Heart right ventricle (tissue), 16 donors: ENCODE measurements at regions of chr3 and their contacts with region 1.

Region 1: GRCh38 chr3:127544192-127544802 is 46.2 kb downstream of the TPRA1 start:
- DNase-seq: peak; percentile 68 to 71
- ATAC-seq: peak in 7 of 8 donors; percentile 3 to 51 (median 45)
- H3K4me3 ChIP-seq: no peak overlapping the region
- H3K27ac ChIP-seq: no peak overlapping the region
- H3K4me1 ChIP-seq: peaks cover 0 to 21% (median 13%) of the 10 kb centered on the region in 9 donors
- H3K27me3 ChIP-seq: no peaks in the 10 kb centered on the region
- CTCF ChIP-seq: peak; percentile 63 to 85 (median 78)

Region 2: DNA sequence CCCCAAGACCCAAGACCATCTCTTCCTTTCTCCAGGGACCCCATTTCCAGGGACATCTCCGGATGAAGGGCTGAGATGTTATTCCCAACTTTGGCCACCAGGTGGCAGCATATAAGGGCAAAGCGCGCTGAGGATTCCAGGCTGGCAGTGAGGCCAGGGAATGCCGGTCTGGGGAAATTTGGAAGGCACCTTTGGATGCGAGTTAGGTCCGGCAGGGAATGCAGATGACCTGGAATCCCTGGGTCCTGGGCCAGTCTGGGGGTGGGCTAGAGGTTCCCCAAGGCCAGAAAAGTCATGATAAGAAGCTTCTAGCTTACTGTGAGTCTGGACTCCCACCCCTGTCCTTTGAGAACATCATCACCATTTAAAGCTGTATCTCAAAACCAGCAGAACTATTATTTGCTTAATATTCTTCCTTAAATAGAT is 1021.9 kb before region 1 on chr3:
- intact Hi-C with region 1: loop called in 6 of 10 experiments (anchors 5 to 10 kb)
- DNase-seq: peak in 1 of 2 donors; percentile 39
- ATAC-seq: peak in 5 of 8 donors; percentile 6 to 60 (median 47)
- H3K4me3 ChIP-seq: no peak overlapping the region
- H3K27ac ChIP-seq: no peak overlapping the region
- H3K4me1 ChIP-seq: peaks cover 0 to 13% (median 6%) of the 10 kb centered on the region in 9 donors
- H3K27me3 ChIP-seq: peaks cover 0 to 24% (median 16%) of the 10 kb centered on the region in 7 donors
- CTCF ChIP-seq: peak; percentile 78 to 96 (median 90)

Region 3: DNA sequence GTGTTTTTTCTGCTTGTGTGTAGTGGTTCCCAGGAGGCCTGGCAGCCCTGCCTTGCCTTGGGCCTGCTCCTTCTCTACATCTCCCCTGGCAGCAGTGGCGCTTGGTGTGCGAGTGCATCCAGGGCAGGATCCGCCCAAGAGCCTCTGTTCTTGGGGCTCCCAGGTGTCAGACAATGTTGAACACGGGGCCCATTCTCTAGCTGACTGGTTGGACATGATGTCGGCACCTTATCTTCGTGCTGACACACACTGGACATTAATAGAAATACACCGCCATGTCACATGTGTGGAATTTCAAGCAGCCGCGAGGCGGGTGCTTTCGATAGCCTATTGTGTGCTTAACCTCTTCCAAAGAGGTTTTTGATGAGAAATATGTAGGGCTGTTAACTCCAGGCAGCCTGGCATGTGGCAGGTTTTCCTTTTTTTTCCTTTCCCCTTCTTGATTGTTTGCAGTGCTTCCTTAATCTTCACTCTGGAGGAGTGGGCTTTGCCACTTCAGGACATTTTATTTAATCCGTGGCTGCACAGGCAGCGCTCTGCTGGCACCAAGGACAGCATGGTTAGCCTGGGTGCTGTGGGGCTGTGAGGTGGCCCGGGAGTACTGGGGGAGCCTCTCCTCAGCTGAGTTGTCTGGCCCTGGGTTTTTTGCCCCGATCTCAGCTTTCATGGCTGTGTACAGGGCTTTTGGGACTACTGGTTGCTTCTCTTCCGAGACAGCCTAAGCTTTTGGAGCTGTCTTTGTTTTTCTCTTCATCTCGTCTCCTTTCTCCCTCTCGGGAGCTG is 797.7 kb before region 1 on chr3:
- intact Hi-C with region 1: loop called in 7 of 10 experiments (anchors 5 to 10 kb)
- DNase-seq: peak; percentile 58 to 75
- ATAC-seq: peak; percentile 86 to 93 (median 91)
- H3K4me3 ChIP-seq: peak overlapping the region in 4 of 10 donors; percentile 2 to 20 (median 8)
- H3K27ac ChIP-seq: peak overlapping the region; percentile 67 to 91 (median 88)
- H3K4me1 ChIP-seq: peaks cover 0 to 49% (median 17%) of the 10 kb centered on the region in 9 donors
- H3K27me3 ChIP-seq: no peaks in the 10 kb centered on the region
- CTCF ChIP-seq: peak in 2 of 9 donors; percentile 11 to 21

Region 4: DNA sequence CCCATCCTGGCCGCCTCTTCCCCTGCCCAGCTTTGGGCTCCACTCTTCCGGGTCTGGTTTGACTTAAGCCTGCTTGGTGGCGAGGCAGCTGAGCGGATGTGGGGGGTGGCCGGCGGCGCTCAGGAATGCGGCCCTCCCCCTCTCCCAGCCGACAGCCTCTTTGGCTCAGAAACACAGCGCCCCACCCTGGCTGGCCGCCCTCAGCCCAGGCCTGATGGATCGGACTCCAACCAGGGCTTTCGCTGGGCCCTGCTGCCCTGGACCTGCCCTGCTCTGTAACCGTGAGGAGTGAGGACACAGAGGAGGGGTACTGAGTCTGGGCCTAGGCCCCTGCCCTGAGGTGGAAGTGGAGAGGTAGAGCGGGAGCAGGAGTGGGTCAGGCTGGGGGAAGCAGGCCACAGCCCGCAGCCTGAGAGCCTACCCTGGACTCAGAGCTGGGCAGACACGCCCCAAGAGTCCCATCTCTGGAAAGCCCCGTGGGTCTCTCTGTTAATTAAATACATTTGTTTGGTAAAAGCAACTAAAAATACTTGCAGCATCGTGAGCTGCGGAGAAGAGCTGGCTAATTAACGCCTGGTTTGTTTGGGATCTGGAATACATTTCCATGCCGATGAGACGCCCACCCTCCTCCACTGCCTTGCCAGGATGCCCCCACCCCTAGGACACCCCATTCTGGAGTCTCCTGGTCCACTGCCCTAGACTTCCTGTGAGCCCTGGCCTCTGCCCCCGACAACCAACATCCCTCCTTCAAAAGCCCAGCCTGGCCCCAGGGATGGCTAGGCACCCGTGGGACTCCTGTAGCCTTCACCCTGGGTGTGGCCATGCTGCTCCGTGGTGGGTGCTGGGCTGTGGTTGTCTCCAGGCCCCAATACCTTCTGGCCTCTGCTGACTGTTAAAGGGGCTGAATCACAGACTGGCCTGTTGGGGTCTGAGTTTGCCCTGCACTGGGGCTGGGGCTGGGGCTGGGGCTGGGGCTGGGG is 541.8 kb before region 1 on chr3:
- intact Hi-C with region 1: loop called in 1 of 10 experiments (anchors 10 kb)
- DNase-seq: peak; percentile 88 to 91
- ATAC-seq: peak; percentile 82 to 96 (median 91)
- H3K4me3 ChIP-seq: peak overlapping the region in 5 of 10 donors; percentile 10 to 34 (median 22)
- H3K27ac ChIP-seq: peak overlapping the region in 9 of 10 donors; percentile 56 to 86 (median 69)
- H3K4me1 ChIP-seq: peaks cover 8 to 60% (median 33%) of the 10 kb centered on the region in 9 donors
- H3K27me3 ChIP-seq: no peaks in the 10 kb centered on the region
- CTCF ChIP-seq: peak; percentile 21 to 79 (median 53)

Region 5: GRCh38 chr3:127455541-127456450 is 88.5 kb before region 1 on chr3:
- intact Hi-C with region 1: loop called in 1 of 10 experiments (anchors 5 kb)
- DNase-seq: peak; percentile 47 to 73
- ATAC-seq: peak; percentile 83 to 94 (median 89)
- H3K4me3 ChIP-seq: peak overlapping the region in 9 of 10 donors; percentile 12 to 42 (median 35)
- H3K27ac ChIP-seq: no peak overlapping the region
- H3K4me1 ChIP-seq: peaks cover 6 to 26% (median 21%) of the 10 kb centered on the region in 9 donors
- H3K27me3 ChIP-seq: peaks cover 15 to 78% (median 70%) of the 10 kb centered on the region in 7 donors
- CTCF ChIP-seq: peak; percentile 72 to 98 (median 92)

Region 6: DNA sequence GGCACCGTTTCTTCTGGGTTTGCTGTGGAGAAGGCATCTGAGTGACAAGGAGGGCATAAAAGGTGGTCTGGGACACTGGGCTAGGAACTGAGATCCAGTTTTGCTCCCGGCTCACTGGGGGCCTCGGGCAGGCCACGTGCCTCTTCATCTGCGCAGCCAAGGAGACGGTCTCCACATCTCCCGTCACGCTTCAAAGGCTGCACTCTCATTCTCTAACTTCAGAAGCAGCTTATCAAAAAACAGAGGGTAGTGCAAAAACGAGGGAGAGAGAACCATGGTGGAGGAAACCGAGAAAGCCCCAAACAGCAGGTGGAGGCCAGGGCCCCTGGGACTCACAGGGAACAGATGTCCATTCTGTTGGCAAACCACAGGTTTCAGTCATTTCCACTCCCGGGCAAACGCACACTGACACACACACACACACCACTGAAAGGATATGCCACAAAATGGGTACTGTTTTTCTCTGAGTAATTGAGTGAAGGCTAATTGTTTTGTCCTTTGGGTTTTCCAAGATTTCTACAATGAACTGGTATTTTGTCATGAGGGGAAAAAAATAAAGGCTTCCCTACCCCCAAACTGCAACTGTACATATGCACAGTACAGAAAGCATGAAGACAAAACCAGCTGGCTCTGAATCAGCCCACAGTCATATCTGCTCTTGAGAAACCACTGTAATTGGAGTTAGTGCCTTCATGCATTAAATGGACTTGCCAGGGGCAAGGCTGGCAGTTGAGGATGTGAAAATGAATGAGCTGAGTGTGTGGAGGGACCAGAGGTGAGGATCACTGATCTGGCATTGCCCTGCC is 206.1 kb after region 1 on chr3:
- intact Hi-C with region 1: no loop called
- DNase-seq: no peak
- ATAC-seq: no peak
- H3K4me3 ChIP-seq: no peak overlapping the region
- H3K27ac ChIP-seq: peak overlapping the region; percentile 31 to 94 (median 84)
- H3K4me1 ChIP-seq: peaks cover 21 to 95% (median 66%) of the 10 kb centered on the region in 9 donors
- H3K27me3 ChIP-seq: no peaks in the 10 kb centered on the region
- CTCF ChIP-seq: no peak